Psoas muscle (tissue), 8 donors: ENCODE measurements at regions of chr22 and their contacts with region 1.

Region 1: DNA sequence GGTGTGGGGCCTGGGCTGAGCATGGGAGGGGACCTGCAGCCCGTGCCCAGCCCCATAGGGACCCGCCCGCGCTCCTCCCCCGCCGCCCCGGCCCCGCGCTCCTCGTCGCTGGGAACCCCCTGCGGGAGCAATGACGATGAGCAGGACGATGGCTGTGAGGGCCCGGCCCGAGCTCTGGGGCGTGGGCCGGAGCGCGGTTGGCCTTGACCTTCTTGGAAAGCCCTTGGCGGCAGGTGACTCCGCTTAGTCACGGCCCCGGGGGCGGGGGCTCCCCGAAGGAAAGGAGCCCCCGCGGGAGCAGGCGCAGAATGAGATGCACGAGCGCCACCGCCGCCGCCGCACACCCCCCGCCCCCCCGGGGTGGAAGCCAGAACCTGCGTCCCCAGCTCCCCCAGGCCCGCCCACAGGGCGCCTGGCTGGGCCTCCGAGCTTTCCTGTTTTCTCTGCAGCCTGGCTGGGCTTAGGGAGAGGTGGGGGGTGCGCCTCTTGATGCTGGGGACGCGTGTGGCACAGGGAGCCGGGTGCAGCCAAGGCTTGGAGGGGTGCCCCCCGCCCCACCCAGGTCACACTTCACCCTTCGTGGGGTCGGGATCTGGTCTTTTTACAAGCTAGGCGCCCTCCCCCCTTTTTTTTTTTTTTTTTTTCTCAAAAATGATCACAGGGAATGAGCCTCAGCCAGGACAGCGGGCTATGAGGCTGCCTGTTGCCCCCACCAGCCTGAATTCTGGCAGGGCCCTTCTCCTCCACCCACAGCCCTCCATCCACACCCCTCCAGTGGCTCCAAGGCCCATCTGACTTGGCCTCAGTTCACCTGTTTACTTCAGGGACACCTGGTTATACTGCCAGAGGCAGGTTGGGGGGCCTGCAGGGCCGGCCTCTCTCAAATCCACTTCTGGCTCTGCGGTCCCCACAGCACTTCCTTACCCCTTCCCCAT is 17.9 kb downstream of the CRELD2 start:
- DNase-seq: peak; percentile 96 to 97
- ATAC-seq: peak; percentile 67 to 76 (median 73)
- H3K4me3 ChIP-seq: peak overlapping the region; percentile 73
- H3K27ac ChIP-seq: peak overlapping the region; percentile 95
- H3K4me1 ChIP-seq: peaks cover 52% of the 10 kb centered on the region
- H3K27me3 ChIP-seq: no peaks in the 10 kb centered on the region
- CTCF ChIP-seq: no peak

Region 2: DNA sequence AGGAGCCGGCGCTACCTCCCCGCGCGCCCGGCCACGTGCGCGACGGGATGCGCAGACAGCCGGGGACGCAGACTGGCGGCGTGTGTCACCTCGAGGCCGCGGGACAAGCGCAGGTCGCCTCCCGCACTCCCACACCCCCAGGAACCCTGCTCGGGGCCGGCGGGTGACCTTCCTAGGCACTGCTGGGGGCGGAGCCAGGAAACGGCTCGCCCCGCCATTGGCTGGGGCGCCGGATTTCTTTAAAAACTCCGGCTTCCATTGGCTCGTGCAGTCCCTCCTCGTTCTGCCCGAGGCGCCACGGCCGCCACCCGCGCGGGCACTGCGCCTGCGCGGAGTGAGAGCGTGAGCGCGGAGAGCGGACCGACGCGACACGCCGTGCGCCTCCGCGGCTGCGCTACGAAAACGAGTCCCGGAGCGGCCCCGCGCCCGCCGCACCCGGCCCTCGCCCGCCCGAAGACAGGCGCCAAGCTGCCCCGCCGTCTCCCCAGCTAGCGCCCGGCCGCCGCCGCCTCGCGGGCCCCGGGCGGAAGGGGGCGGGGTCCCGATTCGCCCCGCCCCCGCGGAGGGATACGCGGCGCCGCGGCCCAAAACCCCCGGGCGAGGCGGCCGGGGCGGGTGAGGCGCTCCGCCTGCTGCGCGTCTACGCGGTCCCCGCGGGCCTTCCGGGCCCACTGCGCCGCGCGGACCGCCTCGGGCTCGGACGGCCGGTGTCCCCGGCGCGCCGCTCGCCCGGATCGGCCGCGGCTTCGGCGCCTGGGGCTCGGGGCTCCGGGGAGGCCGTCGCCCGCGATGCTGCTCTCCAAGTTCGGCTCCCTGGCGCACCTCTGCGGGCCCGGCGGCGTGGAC is 24.1 kb after region 1 on chr22 and contains the start of gene PIM3:
- intact Hi-C with region 1: loop called (anchors 2 kb)
- DNase-seq: peak; percentile 95 to 97
- ATAC-seq: peak; percentile 77 to 80 (median 78)
- H3K4me3 ChIP-seq: peak within 1 kb of the TSS; percentile 86
- H3K27ac ChIP-seq: peak within 1 kb of the TSS; percentile 97
- H3K4me1 ChIP-seq: peaks cover 40% of the 10 kb centered on the region
- H3K27me3 ChIP-seq: no peaks in the 10 kb centered on the region
- CTCF ChIP-seq: no peak
- total RNA-seq, gene PIM3: 40.5 to 128 (median 84.5) TPM

Region 3: GRCh38 chr22:49970528-49971231 is 34.4 kb after region 1 on chr22:
- intact Hi-C with region 1: no loop called
- DNase-seq: peak; percentile 97 to 98
- ATAC-seq: peak; percentile 83 to 87 (median 84)
- H3K4me3 ChIP-seq: peak overlapping the region; percentile 61
- H3K27ac ChIP-seq: peak overlapping the region; percentile 97
- H3K4me1 ChIP-seq: peaks cover 42% of the 10 kb centered on the region
- H3K27me3 ChIP-seq: no peaks in the 10 kb centered on the region
- CTCF ChIP-seq: no peak

Region 4: GRCh38 chr22:50200461-50201190 is 264.3 kb after region 1 on chr22 and contains the start of gene SELENOO:
- intact Hi-C with region 1: loop called (anchors 5 to 10 kb)
- DNase-seq: peak; percentile 96
- ATAC-seq: peak; percentile 87 to 90 (median 88)
- H3K4me3 ChIP-seq: peak within 1 kb of the TSS; percentile 91
- H3K27ac ChIP-seq: peak within 1 kb of the TSS; percentile 75
- H3K4me1 ChIP-seq: peaks cover 21% of the 10 kb centered on the region
- H3K27me3 ChIP-seq: no peaks in the 10 kb centered on the region
- CTCF ChIP-seq: no peak
- total RNA-seq, gene SELENOO: 10.0 to 26.6 (median 15.9) TPM